ENCODE measurements at regions of chr4 and their contacts with region 1.

Region 1: GRCh38 chr4:7167706-7168105 is 24.6 kb upstream of the SORCS2 start:
- DNase-seq: no peak
- H3K4me3 ChIP-seq: no peak overlapping the region
- H3K27ac ChIP-seq: no peak overlapping the region
- H3K4me1 ChIP-seq: peaks cover 0 to 7% of the 10 kb centered on the region in 2 experiments; a peak in 1 of 4 replicates
- H3K27me3 ChIP-seq: no peaks in the 10 kb centered on the region; the same call in 1 of the 2 replicates
- CTCF ChIP-seq: no peak
- EP300 ChIP-seq: no peak
- RAD21 ChIP-seq: no peak

Region 2: GRCh38 chr4:7081891-7082471 is 85.7 kb before region 1 on chr4:
- CTCF ChIA-PET with region 1: no interaction called
- POLR2A ChIA-PET with region 1: no interaction called
- DNase-seq: peak; percentile 65
- H3K4me3 ChIP-seq: no peak overlapping the region
- H3K27ac ChIP-seq: no peak overlapping the region
- H3K4me1 ChIP-seq: no peaks in the 10 kb centered on the region; a peak in 1 of 4 replicates
- H3K27me3 ChIP-seq: no peaks in the 10 kb centered on the region
- CTCF ChIP-seq: peak; percentile 46
- EP300 ChIP-seq: no peak
- RAD21 ChIP-seq: peak; percentile 66

Region 3: DNA sequence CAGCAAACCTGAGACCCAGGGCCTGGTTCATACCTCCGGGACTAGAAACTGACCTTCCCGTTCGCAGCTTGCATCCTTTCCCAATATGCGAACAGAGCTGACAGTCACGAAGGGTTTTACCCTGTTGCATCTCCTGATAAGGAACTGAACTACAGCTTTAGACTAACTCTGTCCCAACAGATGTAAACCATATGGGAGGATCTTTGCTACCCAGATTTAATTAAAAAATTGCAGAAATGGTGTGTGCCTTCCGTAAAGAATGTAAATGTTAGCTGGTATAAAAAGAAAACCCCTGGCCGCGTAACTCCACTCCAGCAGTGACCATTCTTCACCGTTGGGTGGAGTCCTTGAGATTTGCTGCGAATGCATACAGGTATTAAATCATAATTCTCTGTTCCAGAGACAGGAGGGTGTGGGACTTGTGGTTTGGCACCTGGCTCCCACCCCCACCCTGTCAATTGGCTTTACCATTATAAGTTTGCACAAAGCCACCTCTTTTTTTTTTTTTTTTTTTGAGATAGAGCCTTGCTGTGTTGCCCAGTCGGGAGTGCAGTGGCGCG is 16.0 kb before region 1 on chr4:
- CTCF ChIA-PET with region 1: interaction called, 17 read pairs
- POLR2A ChIA-PET with region 1: no interaction called
- DNase-seq: peak; percentile 74
- H3K4me3 ChIP-seq: no peak overlapping the region; a peak in 1 of 4 replicates
- H3K27ac ChIP-seq: no peak overlapping the region
- H3K4me1 ChIP-seq: peaks cover 0 to 23% of the 10 kb centered on the region in 2 experiments; a peak in 2 of 4 replicates
- H3K27me3 ChIP-seq: peaks cover 32% of the 10 kb centered on the region
- CTCF ChIP-seq: peak; percentile 60
- EP300 ChIP-seq: no peak
- RAD21 ChIP-seq: peak; percentile 77

Region 4: GRCh38 chr4:7156761-7157488 is 10.8 kb before region 1 on chr4:
- CTCF ChIA-PET with region 1: interaction called, 17 read pairs
- POLR2A ChIA-PET with region 1: no interaction called
- DNase-seq: peak; percentile 76
- H3K4me3 ChIP-seq: no peak overlapping the region
- H3K27ac ChIP-seq: no peak overlapping the region
- H3K4me1 ChIP-seq: peaks cover 0 to 20% of the 10 kb centered on the region in 2 experiments; a peak in 2 of 4 replicates
- H3K27me3 ChIP-seq: peaks cover 30% of the 10 kb centered on the region
- CTCF ChIP-seq: peak; percentile 48
- EP300 ChIP-seq: peak in 1 of 2 experiments; percentile 45; a peak in 1 of 4 replicates
- RAD21 ChIP-seq: no peak

Region 5: GRCh38 chr4:7518871-7519637 is 351.3 kb after region 1 on chr4:
- CTCF ChIA-PET with region 1: no interaction called
- POLR2A ChIA-PET with region 1: no interaction called
- DNase-seq: peak; percentile 84
- H3K4me3 ChIP-seq: no peak overlapping the region
- H3K27ac ChIP-seq: no peak overlapping the region
- H3K4me1 ChIP-seq: peaks cover 0 to 52% of the 10 kb centered on the region in 2 experiments; a peak in 1 of 4 replicates
- H3K27me3 ChIP-seq: peaks cover 34% of the 10 kb centered on the region; the same call in 1 of the 2 replicates
- CTCF ChIP-seq: no peak
- EP300 ChIP-seq: no peak; a peak in 1 of 4 replicates
- RAD21 ChIP-seq: no peak; the same call in 1 of the 2 replicates

Measured in SK-N-SH (cell line).